Sigmoid colon (tissue), 7 donors: ENCODE measurements at regions of chr16 and their contacts with region 1.

Region 1: DNA sequence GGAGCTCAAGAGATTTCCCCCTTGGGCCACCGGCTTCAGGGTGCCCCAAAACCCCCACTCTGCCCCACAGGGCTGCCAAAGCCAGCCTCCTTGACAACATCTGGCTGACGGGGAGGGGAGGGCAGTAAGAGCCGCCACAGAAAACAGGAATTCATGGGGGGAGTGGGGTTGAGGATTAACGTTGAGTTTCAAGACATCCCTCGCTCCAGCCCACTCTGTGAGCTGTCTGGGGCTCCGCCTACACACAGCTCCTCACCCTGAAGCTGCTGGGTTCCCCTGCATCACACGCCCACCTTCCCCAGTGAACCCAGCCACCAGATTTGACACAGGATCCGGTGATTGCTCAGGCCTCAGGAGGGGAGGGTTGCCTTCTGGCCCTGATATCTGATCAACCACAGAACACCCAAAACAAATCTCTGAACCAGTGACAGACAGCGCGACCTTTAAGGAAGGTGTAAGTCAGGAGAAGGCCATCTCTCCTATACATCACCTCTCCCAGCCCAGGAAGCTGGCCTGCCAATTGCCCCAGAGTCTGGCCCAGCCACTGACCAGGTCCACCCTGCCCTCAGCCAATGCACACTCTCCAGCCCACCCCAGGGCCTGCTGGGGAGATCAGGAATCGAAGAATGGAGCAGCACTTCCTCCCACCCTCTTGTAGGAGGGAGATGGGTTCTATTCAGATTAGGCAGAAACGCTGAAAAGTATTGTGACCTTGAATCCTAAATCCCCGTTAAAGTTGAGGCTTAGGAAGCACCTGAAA is 132.1 kb downstream of the CLEC16A start:
- DNase-seq: peak; percentile 60
- H3K4me3 ChIP-seq: no peak overlapping the region
- H3K27ac ChIP-seq: peak overlapping the region in 3 of 4 donors; percentile 80 to 87 (median 83)
- H3K4me1 ChIP-seq: peaks cover 0 to 70% (median 66%) of the 10 kb centered on the region in 4 donors
- H3K27me3 ChIP-seq: no peaks in the 10 kb centered on the region
- CTCF ChIP-seq: no peak
- EP300 ChIP-seq: no peak
- POLR2A ChIP-seq: no peak

Region 2: DNA sequence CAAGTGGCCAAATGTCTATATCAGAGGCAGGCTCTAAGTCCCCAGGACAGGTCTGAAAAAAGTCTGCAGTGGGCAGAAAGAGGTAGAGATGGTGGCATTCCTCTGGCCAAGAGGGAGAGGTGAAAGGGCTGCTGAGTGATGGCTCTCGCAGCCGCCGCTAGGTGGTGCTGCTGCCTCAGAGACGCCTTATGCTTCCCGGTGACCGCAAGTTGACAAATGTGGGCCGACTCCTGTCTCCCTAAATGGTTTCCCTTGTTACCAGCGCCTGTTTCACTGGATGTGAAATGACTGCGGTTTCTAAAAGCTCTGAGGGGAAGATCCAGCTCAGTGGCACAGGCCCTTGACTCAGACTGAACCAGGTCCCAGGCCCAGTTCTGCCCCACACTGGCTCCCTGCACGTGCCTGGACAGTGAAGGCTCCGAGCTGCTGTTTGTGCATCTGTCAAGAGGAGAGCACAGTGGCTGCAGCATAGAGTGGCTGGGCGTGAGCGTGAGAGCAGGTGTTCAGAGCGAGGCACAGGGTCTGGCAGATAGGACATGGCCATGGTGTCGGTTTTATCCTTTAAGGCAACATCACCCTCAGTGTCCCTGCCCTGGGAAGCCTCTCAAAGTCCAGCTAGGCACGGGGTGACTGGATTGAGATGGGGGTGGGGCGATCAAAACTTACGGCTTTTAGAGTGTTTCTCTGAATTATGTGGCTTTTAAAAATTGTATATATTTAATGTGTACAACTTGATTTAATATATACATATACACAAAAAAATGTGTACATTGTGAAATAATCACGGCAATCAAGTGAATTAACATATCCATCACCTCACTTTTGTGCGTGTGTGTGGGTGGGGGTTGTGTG is 112.2 kb before region 1 on chr16:
- intact Hi-C with region 1: no loop called
- DNase-seq: peak; percentile 89
- H3K4me3 ChIP-seq: no peak overlapping the region
- H3K27ac ChIP-seq: peak overlapping the region; percentile 10 to 71 (median 37)
- H3K4me1 ChIP-seq: peaks cover 0 to 25% (median 17%) of the 10 kb centered on the region in 4 donors
- H3K27me3 ChIP-seq: no peaks in the 10 kb centered on the region
- CTCF ChIP-seq: peak; percentile 91 to 95 (median 94)
- EP300 ChIP-seq: no peak
- POLR2A ChIP-seq: no peak

Region 3: GRCh38 chr16:10981697-10982216 is 94.7 kb before region 1 on chr16:
- intact Hi-C with region 1: loop called (anchors 5 kb)
- DNase-seq: no peak
- H3K4me3 ChIP-seq: no peak overlapping the region
- H3K27ac ChIP-seq: peak overlapping the region in 1 of 4 donors; percentile 88
- H3K4me1 ChIP-seq: peaks cover 0 to 24% (median 23%) of the 10 kb centered on the region in 4 donors
- H3K27me3 ChIP-seq: no peaks in the 10 kb centered on the region
- CTCF ChIP-seq: no peak
- EP300 ChIP-seq: no peak
- POLR2A ChIP-seq: no peak

Region 4: GRCh38 chr16:11100239-11100750 is 23.9 kb after region 1 on chr16:
- intact Hi-C with region 1: loop called (anchors 1 kb)
- DNase-seq: peak; percentile 92
- H3K4me3 ChIP-seq: no peak overlapping the region
- H3K27ac ChIP-seq: peak overlapping the region; percentile 76 to 81 (median 80)
- H3K4me1 ChIP-seq: peaks cover 0 to 52% (median 50%) of the 10 kb centered on the region in 4 donors
- H3K27me3 ChIP-seq: no peaks in the 10 kb centered on the region
- CTCF ChIP-seq: peak in 3 of 4 experiments; percentile 24 to 52 (median 41)
- EP300 ChIP-seq: no peak
- POLR2A ChIP-seq: no peak

Region 5: GRCh38 chr16:11114366-11115164 is 38.1 kb after region 1 on chr16:
- intact Hi-C with region 1: no loop called
- DNase-seq: no peak
- H3K4me3 ChIP-seq: no peak overlapping the region
- H3K27ac ChIP-seq: no peak overlapping the region
- H3K4me1 ChIP-seq: peaks cover 0 to 14% (median 4%) of the 10 kb centered on the region in 4 donors
- H3K27me3 ChIP-seq: no peaks in the 10 kb centered on the region
- CTCF ChIP-seq: no peak
- EP300 ChIP-seq: no peak
- POLR2A ChIP-seq: no peak

Region 6: DNA sequence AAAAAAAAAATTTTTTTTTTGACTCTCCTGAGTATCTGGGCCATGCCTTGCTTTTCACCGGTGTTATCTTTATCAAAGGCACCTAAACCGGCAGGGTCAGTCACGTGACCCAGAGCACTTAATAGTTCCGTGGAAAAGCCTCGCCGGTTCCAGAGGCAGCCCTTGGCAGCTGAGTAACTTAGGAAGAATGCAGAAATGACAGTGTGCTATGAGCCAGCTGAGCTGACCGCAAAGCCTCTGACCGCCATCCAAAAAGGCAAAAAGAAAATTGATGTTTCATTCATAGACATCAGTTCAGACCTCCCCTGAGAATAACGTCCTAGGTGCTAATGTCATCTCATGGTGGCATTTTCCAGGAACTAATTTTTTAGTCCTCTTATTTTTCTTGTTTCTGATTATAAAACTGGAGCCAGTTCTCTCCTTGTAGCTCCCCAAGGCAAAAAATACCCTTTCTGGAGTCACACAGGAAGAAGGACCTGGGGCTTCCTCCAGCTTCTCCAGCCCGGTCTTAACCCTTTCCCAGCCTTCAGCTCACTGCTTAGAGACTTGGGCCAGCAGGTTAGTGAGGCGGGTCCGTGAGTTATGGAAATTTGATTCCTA is 57.0 kb after region 1 on chr16:
- intact Hi-C with region 1: loop called (anchors 2 kb)
- DNase-seq: peak; percentile 95
- H3K4me3 ChIP-seq: no peak overlapping the region
- H3K27ac ChIP-seq: peak overlapping the region; percentile 78 to 86 (median 82)
- H3K4me1 ChIP-seq: peaks cover 0 to 68% (median 59%) of the 10 kb centered on the region in 4 donors
- H3K27me3 ChIP-seq: no peaks in the 10 kb centered on the region
- CTCF ChIP-seq: no peak
- EP300 ChIP-seq: peak in 1 of 4 donors; percentile 58
- POLR2A ChIP-seq: no peak